HEK293 (cell line): ENCODE measurements at regions of chr6 and their contacts with region 1.

Region 1: DNA sequence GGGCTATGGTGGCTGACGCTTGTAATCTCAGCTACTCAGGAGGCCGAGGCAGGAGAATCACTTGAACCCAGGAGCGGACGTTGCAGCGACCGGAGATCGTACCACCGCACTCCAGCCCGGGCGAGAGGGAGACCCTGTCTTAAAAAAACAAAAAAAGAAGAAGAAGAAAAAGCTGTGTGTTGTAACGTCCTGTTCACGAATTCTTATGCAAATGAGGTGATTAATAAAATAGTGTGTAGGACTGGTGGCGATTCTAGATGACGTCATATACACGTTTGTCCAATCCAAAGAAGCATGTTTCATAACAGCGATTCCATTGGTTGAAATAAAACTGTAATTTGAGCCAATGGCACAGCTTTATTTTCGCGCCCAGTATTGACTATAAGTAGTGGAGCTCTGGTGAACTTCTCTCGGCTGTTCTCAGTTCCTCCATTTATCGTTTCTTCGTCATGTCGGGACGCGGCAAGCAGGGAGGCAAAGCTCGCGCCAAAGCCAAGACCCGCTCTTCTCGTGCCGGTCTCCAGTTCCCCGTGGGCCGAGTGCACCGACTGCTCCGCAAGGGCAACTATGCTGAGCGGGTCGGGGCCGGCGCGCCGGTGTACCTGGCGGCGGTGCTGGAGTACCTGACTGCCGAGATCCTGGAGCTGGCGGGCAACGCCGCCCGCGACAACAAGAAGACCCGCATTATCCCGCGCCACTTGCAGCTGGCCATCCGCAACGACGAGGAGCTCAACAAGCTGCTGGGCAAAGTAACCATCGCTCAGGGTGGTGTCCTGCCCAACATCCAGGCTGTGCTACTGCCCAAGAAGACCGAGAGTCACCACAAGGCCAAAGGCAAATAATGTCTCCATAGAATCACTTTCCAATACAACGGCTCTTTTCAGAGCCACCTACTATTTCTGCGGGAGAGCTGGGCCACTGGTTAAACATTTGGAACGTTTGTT is 47.0 kb downstream of the OR2B2 start:
- H3K4me3 ChIP-seq: peak overlapping the region; percentile 78
- H3K27ac ChIP-seq: peak overlapping the region; percentile 63
- H3K4me1 ChIP-seq: no peaks in the 10 kb centered on the region
- CTCF ChIP-seq: no peak

Region 2: DNA sequence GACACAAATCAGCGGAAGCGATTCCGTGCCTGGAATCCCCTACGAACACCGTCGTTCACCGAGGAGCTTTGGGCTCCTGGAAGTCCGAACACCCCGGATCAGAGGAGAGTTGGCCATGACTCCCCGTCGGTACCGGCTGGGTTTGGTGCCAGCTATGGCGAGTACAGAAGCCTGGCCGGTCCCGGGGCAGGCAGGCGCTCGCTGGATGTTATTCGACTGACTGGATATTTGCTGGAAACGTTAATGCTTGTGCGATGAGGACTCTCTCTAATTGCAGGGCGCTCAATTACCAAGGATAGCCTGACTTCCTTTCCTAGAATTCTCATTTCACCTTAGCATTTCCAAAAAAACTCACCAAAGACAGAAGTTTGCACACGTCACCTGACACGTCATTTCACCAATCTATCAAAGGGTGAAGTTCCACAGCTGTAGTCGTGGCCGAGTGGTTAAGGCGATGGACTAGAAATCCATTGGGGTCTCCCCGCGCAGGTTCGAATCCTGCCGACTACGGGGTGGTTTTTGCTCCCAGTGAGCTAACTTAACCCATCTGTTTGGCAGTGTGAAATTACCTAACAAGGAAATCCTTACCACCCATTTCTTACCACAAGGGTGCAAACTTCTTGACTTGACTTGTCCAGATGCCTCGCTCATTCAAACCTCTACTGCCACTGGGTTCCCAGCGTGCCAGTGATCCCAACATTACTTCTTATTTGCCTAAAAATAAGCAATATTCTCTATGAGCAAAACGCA is 369.6 kb before region 1 on chr6:
- CTCF ChIA-PET with region 1: no interaction called
- POLR2A ChIA-PET with region 1: interaction called, 11 read pairs
- H3K4me3 ChIP-seq: peak overlapping the region; percentile 84
- H3K27ac ChIP-seq: peak overlapping the region; percentile 52; the same call in 1 of the 2 replicates
- H3K4me1 ChIP-seq: peaks cover 2% of the 10 kb centered on the region; the same call in 1 of the 2 replicates
- CTCF ChIP-seq: peak; percentile 82

Region 3: GRCh38 chr6:27847706-27848105 is 17.5 kb before region 1 on chr6:
- CTCF ChIA-PET with region 1: interaction called, 4 read pairs
- POLR2A ChIA-PET with region 1: interaction called, 25 read pairs
- H3K4me3 ChIP-seq: no peak overlapping the region
- H3K27ac ChIP-seq: no peak overlapping the region
- H3K4me1 ChIP-seq: no peaks in the 10 kb centered on the region
- CTCF ChIP-seq: no peak